T-cell (primary cell): ENCODE measurements at regions of chr1 and their contacts with region 1.

Region 1: DNA sequence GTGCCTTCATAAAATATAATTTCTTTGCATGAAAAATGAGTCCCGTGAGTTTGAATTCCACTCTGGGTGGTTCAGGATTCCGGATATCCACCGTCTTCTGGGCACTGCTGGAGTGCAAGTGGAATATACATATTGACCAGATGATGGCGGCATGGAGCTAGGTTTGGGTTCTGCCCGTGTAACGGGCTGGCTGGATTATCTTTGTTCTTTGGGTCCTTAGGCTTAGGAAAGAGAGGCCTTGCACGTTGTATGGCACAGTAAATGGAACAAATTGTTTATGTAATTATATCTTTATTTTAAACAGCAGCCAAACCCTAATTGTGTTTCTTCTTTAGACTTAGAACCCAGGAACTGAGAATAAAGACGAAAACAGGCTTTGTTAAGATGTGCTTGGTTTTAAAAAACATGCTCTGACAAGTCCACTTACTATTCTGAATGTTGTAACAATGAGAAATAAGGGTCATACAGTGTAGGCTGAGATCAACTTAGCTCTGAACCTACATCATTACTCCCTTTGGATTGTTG is 13.5 kb upstream of the ACBD6 start:
- DNase-seq: peak in 33 of 35 experiments; percentile 5 to 81 (median 38)
- ATAC-seq: peak; percentile 77 to 90 (median 83)
- H3K4me3 ChIP-seq: no peak overlapping the region
- H3K4me3 Mint-ChIP-seq: no peak overlapping the region
- H3K27ac ChIP-seq: no peak overlapping the region
- H3K27ac Mint-ChIP-seq: no peak overlapping the region
- H3K4me1 ChIP-seq: no peaks in the 10 kb centered on the region
- H3K4me1 Mint-ChIP-seq: peaks cover 0 to 2% (median 1%) of the 10 kb centered on the region in 3 donors
- H3K27me3 ChIP-seq: peaks cover 0 to 5% of the 10 kb centered on the region in 2 experiments
- H3K27me3 Mint-ChIP-seq: peaks cover 13 to 20% of the 10 kb centered on the region in 2 donors

Region 2: DNA sequence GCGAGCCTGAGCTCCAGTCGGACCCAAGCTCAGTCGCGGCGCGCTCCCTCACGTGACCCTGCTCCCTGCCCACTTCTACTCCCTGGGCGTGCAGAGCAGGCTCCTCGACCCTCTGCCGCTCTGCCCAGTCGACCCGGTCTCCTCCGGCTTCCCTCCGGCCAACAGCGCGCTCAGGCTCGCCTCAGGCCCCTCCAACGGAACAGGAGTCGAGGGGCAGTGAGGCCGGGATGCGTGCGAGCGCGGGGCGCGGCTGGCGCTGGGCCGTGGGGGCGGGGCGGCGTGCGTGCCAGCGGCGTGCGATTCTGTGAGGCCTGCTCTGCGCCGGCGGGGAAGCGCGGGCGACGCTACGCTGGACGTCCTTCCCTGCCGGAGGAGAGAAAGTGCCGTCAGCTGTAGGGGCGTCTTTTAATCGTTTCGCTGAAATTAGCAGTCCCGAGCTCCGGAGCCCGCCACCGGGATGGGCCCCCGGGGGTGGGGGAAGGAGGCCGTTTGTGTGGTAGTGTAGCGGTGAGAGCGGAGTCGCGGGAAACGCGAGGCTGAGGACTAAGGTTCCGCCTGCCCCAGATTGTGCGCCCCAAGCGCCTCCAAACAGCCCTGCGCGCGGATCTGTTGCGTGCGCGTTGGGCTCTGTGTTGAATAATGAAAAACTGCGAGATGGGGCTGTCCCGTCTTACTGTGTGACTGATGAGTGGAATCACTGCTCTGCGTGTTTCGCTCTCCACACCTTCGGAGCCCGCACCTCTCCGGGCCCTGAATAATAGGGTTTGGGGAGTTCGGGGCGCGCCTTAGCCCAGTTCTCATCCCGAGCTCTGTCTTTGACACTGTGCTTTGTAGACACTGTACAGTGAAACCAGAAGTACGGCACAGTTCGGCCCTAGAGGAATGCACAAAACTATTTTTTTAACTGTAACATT is 13.3 kb before region 1 on chr1 and contains the start of gene ACBD6:
- CTCF ChIA-PET with region 1: interaction called, 8 to 18 read pairs
- POLR2A ChIA-PET with region 1: interaction called in 1 of 2 experiments, 3 read pairs
- DNase-seq: peak; percentile 77 to 90 (median 83)
- ATAC-seq: peak; percentile 89 to 92 (median 90)
- H3K4me3 ChIP-seq: peak within 1 kb of the TSS; percentile 97 to 99
- H3K4me3 Mint-ChIP-seq: peak within 1 kb of the TSS; percentile 92 to 96 (median 95)
- H3K27ac ChIP-seq: peak within 1 kb of the TSS; percentile 87
- H3K27ac Mint-ChIP-seq: peak within 1 kb of the TSS; percentile 96 to 99
- H3K4me1 ChIP-seq: peaks cover 21 to 22% of the 10 kb centered on the region in 2 experiments
- H3K4me1 Mint-ChIP-seq: peaks cover 29 to 40% (median 39%) of the 10 kb centered on the region in 3 donors
- H3K27me3 ChIP-seq: no peaks in the 10 kb centered on the region
- H3K27me3 Mint-ChIP-seq: no peaks in the 10 kb centered on the region
- total RNA-seq, gene ACBD6: 44.3 to 58.5 (median 53.0) TPM